WTC11 (cell line): ENCODE measurements at regions of chr3 and their contacts with region 1.

Region 1: DNA sequence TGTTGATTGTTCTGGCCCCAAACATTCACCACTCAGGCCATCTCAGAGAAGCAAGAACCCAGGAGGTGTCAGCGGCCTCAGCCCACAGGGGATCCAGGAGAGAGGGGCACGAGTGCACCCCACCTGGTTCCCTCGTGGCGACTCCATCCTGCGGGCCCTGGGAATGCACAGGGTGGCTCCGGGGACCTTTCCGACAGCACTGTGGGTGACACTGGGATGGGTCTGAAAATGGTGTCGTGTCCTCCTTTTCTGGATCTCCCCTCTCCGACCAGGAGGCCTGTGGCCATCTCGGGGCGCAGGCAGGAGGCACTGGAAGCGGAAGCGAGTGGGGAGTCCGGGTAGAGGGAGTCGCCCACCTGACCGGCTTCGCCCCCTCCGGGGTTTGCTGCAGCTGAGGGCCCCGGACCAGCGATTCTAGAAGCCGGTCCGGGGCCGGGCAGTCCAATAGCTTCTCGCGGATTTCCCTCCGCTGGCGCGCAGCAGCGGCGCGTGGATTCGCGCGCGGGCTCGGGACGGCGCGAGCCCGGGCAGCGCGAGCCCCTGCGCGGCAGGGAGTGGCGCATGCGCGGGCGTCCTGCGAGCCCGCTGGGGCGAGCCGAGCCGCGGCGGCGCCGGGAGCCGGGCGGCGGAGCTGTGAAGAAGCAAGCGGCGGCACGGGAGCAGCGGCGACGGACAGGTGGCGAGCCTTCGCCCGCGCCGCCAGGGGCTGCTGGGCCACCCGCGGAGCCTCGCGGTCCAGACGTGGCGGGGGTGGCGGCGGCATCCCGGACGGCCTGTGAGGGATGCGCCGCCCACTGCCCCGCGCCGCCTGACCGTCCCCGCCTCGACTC is at the start of gene DOCK3:
- DNase-seq: peak; percentile 55
- ATAC-seq: peak; percentile 59
- H3K4me3 Mint-ChIP-seq: peak within 1 kb of the TSS; percentile 76
- H3K27ac Mint-ChIP-seq: no peak within 1 kb of the TSS
- H3K4me1 Mint-ChIP-seq: peaks cover 29% of the 10 kb centered on the region
- H3K27me3 Mint-ChIP-seq: peaks cover 33% of the 10 kb centered on the region
- CTCF ChIP-seq: no peak
- total RNA-seq, gene DOCK3: 5.2 to 5.6 TPM (median 5.5 TPM) in 3 replicates

Region 2: DNA sequence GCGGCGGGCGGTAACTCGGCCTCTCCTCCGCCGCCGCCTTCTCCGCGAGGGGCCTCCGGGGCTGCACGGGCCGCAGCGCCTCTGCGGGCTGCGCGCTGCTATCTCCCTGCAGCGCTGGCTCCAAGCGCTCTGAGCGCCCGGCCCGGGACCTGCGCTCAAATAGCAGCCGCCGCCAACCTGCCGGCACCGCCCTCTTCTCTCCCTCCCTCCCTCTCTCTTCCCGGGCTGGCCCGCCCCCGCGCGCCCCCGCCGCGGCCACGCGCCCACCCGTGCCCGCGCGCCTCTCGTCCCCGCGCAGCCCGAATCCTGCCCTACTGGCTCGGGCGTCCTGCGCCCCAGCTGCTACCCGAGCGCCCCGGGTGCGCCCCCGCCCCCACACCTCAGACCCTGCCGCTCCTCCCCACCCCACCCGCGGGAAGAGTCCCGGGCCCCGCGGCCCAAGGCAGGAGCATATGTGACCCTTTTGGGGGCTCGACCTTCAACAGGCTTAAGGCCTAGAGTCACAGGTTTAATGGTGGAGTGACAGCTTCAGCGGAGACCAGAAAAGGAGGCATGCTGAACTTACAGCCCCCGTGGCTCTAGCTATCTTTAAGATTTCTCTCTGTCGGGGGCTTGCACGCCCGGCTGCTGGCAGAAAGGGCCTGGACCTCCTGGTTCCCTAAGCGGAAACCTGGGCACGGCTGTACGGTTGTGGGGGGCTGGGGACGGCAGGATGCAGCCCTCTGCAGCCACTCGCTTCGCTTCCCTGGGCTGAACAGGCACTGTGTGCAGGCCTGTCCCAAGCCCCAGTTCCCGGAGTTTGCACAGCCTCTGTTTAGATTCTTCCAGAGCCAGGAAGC is 170.8 kb before region 1 on chr3 and contains the start of gene CACNA2D2:
- CTCF ChIA-PET with region 1: no interaction called
- POLR2A ChIA-PET with region 1: no interaction called
- DNase-seq: peak; percentile 79
- ATAC-seq: peak; percentile 80
- H3K4me3 Mint-ChIP-seq: peak within 1 kb of the TSS; percentile 73
- H3K27ac Mint-ChIP-seq: no peak within 1 kb of the TSS
- H3K4me1 Mint-ChIP-seq: peaks cover 15% of the 10 kb centered on the region
- H3K27me3 Mint-ChIP-seq: peaks cover 39% of the 10 kb centered on the region
- CTCF ChIP-seq: no peak
- total RNA-seq, gene CACNA2D2: 22.0 to 23.4 TPM (median 22.3 TPM) in 3 replicates

Region 3: GRCh38 chr3:50600841-50601591 is 73.5 kb before region 1 on chr3:
- CTCF ChIA-PET with region 1: no interaction called
- POLR2A ChIA-PET with region 1: no interaction called
- DNase-seq: no peak
- ATAC-seq: peak; percentile 33
- H3K4me3 Mint-ChIP-seq: no peak overlapping the region
- H3K27ac Mint-ChIP-seq: no peak overlapping the region; the same call in 1 of the 2 replicates
- H3K4me1 Mint-ChIP-seq: no peaks in the 10 kb centered on the region
- H3K27me3 Mint-ChIP-seq: peaks cover 3% of the 10 kb centered on the region
- CTCF ChIP-seq: no peak

Region 4: GRCh38 chr3:50885070-50885850 is 210.7 kb after region 1 on chr3:
- CTCF ChIA-PET with region 1: interaction called, 13 read pairs
- POLR2A ChIA-PET with region 1: no interaction called
- DNase-seq: peak; percentile 57
- ATAC-seq: peak; percentile 96
- H3K4me3 Mint-ChIP-seq: no peak overlapping the region
- H3K27ac Mint-ChIP-seq: no peak overlapping the region
- H3K4me1 Mint-ChIP-seq: peaks cover 13% of the 10 kb centered on the region
- H3K27me3 Mint-ChIP-seq: no peaks in the 10 kb centered on the region
- CTCF ChIP-seq: peak; percentile 24; the same call in 1 of the 2 replicates

Region 5: GRCh38 chr3:50978991-50979667 is 304.6 kb after region 1 on chr3:
- CTCF ChIA-PET with region 1: interaction called, 10 read pairs
- POLR2A ChIA-PET with region 1: interaction called, 3 read pairs
- DNase-seq: peak; percentile 64
- ATAC-seq: peak; percentile 89
- H3K4me3 Mint-ChIP-seq: peak overlapping the region; percentile 81
- H3K27ac Mint-ChIP-seq: peak overlapping the region; percentile 96
- H3K4me1 Mint-ChIP-seq: peaks cover 20% of the 10 kb centered on the region
- H3K27me3 Mint-ChIP-seq: no peaks in the 10 kb centered on the region
- CTCF ChIP-seq: no peak